HCT116 (cell line): ENCODE measurements at regions of chr14 and their contacts with region 1.

Region 1: DNA sequence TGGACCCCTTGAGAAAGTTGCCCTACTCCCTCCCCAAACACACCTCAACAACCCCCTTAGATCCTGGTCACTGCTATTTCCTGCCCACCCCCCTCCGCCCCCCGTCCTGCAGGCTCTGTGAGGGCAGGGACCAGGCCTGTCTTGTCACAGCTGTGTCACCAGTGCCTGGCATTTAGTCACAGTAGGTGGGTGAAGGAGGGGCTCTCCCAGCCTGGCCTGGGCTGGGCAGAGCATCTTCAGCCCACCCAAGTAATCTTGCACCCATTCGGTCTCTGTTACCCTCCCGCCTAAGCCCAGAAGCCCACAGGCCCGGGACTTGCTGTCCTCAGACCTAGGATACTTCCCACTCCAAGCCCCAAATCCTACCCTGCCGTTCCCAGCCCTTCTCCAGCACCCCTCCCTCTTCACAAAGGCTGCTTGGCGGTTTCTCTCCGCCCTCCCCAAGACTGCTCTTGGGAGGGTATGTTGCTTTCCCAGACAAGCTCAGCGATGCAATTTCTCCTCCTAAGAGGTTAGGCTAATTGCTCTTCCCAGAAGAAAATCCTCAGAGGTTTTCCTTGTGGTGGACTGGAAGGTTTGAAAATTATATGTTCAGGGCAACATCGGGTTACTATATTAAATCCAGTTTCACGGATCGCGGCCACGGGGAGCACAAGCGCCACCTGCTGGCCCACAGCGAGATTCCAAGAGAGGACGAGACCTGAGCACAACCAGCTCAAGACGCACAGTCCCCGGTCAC is 50.8 kb upstream of the ZFP36L1 start:
- DNase-seq: peak; percentile 58
- ATAC-seq: peak; percentile 95
- H3K4me3 ChIP-seq: peak overlapping the region; percentile 23 to 50
- H3K27ac ChIP-seq: peak overlapping the region; percentile 28; the same call in 1 of the 2 replicates
- H3K4me1 ChIP-seq: peaks cover 6 to 9% of the 10 kb centered on the region in 2 experiments
- H3K27me3 ChIP-seq: no peaks in the 10 kb centered on the region
- CTCF ChIP-seq: peak; percentile 72 to 94 (median 93)
- POLR2A ChIP-seq: no peak
- RAD21 ChIP-seq: peak; percentile 85

Region 2: GRCh38 chr14:67837011-67837624 is 1006.5 kb before region 1 on chr14:
- CTCF ChIA-PET with region 1: interaction called, 6 read pairs
- POLR2A ChIA-PET with region 1: no interaction called
- RAD21 ChIA-PET with region 1: no interaction called
- intact Hi-C with region 1: loop called (anchors 10 kb)
- DNase-seq: peak; percentile 72
- ATAC-seq: peak; percentile 67
- H3K4me3 ChIP-seq: no peak overlapping the region
- H3K27ac ChIP-seq: no peak overlapping the region
- H3K4me1 ChIP-seq: no peaks in the 10 kb centered on the region
- H3K27me3 ChIP-seq: no peaks in the 10 kb centered on the region
- CTCF ChIP-seq: peak; percentile 63 to 83 (median 66)
- POLR2A ChIP-seq: no peak
- RAD21 ChIP-seq: peak; percentile 82

Region 3: GRCh38 chr14:68476212-68476907 is 367.3 kb before region 1 on chr14:
- CTCF ChIA-PET with region 1: no interaction called
- POLR2A ChIA-PET with region 1: no interaction called
- RAD21 ChIA-PET with region 1: no interaction called
- intact Hi-C with region 1: no loop called
- DNase-seq: no peak
- ATAC-seq: peak; percentile 73
- H3K4me3 ChIP-seq: peak overlapping the region in 1 of 2 experiments; percentile 11; a peak in 1 of 4 replicates
- H3K27ac ChIP-seq: peak overlapping the region; percentile 91
- H3K4me1 ChIP-seq: peaks cover 53 to 54% of the 10 kb centered on the region in 2 experiments
- H3K27me3 ChIP-seq: no peaks in the 10 kb centered on the region
- CTCF ChIP-seq: no peak
- POLR2A ChIP-seq: no peak
- RAD21 ChIP-seq: peak; percentile 25

Region 4: DNA sequence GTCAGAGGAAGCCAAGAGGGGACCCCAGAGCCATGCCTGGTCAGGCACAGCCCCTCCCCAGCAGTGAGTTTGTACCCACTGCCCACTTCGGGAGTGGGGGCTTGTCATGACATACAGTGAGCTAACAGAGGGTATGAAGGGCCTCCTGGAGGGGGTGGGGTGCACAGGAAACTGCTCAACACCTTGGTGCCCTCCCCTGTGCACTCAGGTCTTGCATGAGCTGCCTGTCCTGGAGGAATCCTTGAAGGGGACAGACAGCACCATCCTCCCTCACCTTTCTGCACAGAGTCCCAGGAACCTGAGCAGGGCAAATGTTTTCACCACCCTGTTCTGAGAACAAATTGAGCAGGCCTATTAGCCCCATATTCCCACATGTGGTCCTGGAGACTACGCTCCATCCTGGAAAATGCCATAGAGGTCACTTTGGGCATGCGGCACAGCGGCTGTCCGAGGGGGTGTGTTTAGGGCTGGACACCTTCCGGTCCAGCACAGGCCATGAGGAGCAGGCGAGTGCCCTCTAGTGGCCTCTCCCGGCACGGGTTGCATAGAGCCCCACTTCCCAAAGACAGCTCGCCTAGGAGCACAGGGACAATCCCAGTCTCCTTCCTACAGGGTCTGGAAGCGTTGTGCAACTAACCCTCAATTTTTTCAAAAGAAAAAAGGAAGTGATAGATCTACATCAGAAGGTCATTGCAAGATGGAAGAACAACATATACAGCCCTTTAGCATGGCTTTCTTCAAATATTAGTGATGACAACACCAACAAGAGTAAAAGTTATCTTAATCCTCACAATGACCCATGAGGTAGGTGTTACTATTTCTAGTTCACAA is 18.9 kb before region 1 on chr14:
- CTCF ChIA-PET with region 1: interaction called, 13 read pairs
- POLR2A ChIA-PET with region 1: no interaction called
- RAD21 ChIA-PET with region 1: interaction called in 1 of 2 experiments, 4 read pairs
- intact Hi-C with region 1: no loop called
- DNase-seq: peak; percentile 76
- ATAC-seq: peak; percentile 99
- H3K4me3 ChIP-seq: peak overlapping the region; percentile 21 to 28; a peak in 3 of 4 replicates
- H3K27ac ChIP-seq: peak overlapping the region; percentile 38
- H3K4me1 ChIP-seq: peaks cover 21 to 23% of the 10 kb centered on the region in 2 experiments
- H3K27me3 ChIP-seq: no peaks in the 10 kb centered on the region
- CTCF ChIP-seq: peak in 2 of 3 experiments; percentile 95 to 97; a peak in 4 of 6 replicates
- POLR2A ChIP-seq: no peak
- RAD21 ChIP-seq: no peak